ENCODE measurements at regions of chr14 and their contacts with region 1.

Region 1: GRCh38 chr14:22386924-22387775 is 201.9 kb downstream of the DAD1 start:
- DNase-seq: no peak
- H3K4me3 ChIP-seq: peak overlapping the region; percentile 13
- CTCF ChIP-seq: peak; percentile 68

Region 2: DNA sequence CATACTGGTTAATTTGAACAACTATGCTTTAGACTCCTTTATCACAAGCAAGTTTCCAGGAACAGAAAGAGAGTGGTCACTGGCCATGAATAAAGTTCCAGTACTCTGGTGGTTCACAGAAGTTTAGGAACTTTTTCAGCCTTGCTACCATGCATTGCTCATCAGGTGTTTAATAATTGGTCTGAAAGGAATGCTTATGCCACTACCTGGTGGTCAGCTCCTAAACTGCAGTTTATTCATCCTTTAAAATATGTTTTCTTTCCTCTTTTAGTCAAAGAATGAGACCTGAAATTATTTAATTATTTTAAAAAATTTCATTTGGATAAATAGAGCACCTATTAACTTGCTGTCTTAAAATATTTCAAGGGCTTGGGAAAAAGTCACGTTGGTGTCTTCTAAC is 453.5 kb before region 1 on chr14:
- CTCF ChIA-PET with region 1: no interaction called
- POLR2A ChIA-PET with region 1: no interaction called
- DNase-seq: no peak
- H3K4me3 ChIP-seq: no peak overlapping the region
- CTCF ChIP-seq: no peak

Region 3: GRCh38 chr14:22047115-22047514 is 340.0 kb before region 1 on chr14:
- CTCF ChIA-PET with region 1: no interaction called
- POLR2A ChIA-PET with region 1: no interaction called
- DNase-seq: no peak
- H3K4me3 ChIP-seq: no peak overlapping the region
- CTCF ChIP-seq: no peak

Region 4: DNA sequence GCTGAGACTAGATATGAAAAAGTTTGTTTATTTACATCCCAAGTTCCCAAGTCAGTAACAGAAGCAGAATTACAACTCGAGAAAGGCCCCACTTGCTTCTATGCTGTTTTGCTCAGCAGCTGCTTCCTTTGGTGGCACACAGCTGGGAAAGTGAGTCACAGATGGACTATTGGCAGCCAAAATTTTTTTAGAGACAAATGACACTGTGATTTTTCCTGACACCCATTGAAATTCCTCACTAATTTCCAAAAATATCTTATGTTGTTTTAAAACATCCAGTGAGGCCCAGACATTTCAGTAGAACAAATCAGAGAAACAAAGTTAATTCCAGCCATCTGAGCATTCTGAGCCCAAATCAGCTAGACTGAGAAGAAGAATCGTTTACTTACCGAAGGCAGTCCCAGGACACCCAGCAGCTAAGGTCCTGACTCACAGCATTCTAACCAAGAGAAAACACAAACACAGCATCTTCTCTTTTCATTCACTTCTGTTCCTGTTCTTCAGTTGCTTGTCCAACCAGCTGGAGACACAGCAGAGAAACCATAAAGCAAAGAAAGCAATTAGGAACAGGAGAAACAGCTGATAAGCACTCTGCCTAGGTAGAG is 13.6 kb after region 1 on chr14:
- CTCF ChIA-PET with region 1: interaction called, 61 read pairs
- POLR2A ChIA-PET with region 1: no interaction called
- DNase-seq: no peak
- H3K4me3 ChIP-seq: no peak overlapping the region
- CTCF ChIP-seq: no peak

Region 5: GRCh38 chr14:22412926-22413411 is 25.8 kb after region 1 on chr14:
- CTCF ChIA-PET with region 1: interaction called, 10 read pairs
- POLR2A ChIA-PET with region 1: no interaction called
- DNase-seq: no peak
- H3K4me3 ChIP-seq: no peak overlapping the region
- CTCF ChIP-seq: no peak

Region 6: GRCh38 chr14:22472935-22473854 is 86.0 kb after region 1 on chr14:
- CTCF ChIA-PET with region 1: interaction called, 332 read pairs
- POLR2A ChIA-PET with region 1: no interaction called
- DNase-seq: no peak
- H3K4me3 ChIP-seq: no peak overlapping the region
- CTCF ChIP-seq: peak; percentile 36

Region 7: DNA sequence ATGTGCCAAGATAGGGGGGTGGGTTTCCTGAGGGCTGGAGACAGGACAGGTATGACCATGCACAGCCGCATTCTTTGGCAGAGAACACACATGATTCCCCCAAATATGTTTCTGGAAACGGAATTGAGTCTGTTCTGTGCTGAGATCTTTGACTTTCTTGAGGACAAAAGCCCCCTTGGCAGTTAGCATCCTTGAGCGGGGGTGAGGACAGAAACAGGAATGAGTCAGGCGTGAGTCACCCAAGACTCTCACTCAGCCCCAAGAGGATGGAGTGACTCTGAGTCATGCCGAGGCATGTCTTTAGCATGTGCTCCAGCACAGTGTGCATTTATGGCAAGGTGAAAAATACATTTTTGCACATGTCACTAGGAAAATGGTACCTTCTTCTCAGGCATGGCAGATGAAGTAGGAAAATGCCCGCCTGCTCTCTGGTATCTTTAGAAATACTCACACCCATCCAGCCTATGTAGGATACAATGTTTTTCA is 149.7 kb after region 1 on chr14:
- CTCF ChIA-PET with region 1: interaction called, 19 read pairs
- POLR2A ChIA-PET with region 1: no interaction called
- DNase-seq: no peak
- H3K4me3 ChIP-seq: no peak overlapping the region
- CTCF ChIP-seq: no peak

Region 8: GRCh38 chr14:22614224-22614799 is 227.2 kb after region 1 on chr14:
- CTCF ChIA-PET with region 1: no interaction called
- POLR2A ChIA-PET with region 1: no interaction called
- DNase-seq: peak; percentile 99
- H3K4me3 ChIP-seq: no peak overlapping the region
- CTCF ChIP-seq: no peak

Measured in AG04449 (cell line).